HepG2 (cell line): ENCODE measurements at regions of chr13 and their contacts with region 1.

Region 1: DNA sequence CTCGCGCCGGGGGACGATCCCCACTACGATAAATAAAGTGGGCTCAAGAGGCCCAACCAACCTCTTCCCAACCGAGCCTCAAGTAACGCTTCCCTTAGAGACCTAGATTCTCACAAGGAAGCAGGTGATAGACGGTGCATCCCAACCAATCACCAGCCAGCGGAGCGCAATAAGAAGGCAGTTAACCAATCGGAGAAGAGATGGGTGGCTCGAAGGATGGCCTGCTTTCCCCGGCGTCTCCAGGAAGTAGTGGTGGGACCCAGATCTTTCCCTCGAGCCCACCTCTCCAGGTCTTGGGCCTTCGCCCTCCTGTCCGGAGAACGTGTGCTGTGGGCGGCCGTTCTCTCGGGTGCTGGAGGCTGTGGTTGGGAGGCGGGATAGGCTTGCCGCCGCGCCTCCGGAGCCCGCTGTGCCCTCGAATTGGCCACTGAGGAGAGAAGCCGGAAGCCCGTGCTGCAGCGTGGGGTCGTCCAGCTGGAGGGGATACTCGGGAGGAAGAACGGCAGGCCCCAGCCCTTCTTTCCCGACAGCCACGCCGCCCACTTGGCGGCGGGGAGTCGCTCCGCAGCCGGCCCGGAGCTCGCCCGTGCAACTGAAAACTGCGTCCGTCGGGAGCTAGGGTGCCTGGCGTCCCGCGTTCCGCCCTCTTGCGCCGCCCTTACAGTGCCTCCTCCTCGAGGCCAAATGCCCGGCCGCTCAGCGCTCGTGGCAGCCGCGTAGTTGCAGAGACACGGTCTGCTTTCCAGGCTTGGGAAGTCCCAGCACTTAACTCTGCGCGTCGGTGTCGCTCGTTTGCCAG is at the start of gene RNF6:
- DNase-seq: peak; percentile 94
- ATAC-seq: peak; percentile 98
- H3K4me3 ChIP-seq: peak within 1 kb of the TSS; percentile 95 to 99 (median 97)
- H3K27ac ChIP-seq: peak within 1 kb of the TSS; percentile 97
- H3K4me1 ChIP-seq: peaks cover 27% of the 10 kb centered on the region
- H3K27me3 ChIP-seq: no peaks in the 10 kb centered on the region; a peak in 1 of 5 replicates
- CTCF ChIP-seq: peak; percentile 35
- EP300 ChIP-seq: 0 out of 4 replicates have a peak, but pooled peaks of 1 of the 2 experiments have one; percentile 2
- POLR2A ChIP-seq: peak; percentile 65 to 92
- RAD21 ChIP-seq: 0 out of 2 replicates have a peak, but pooled peaks have one; percentile 26
- total RNA-seq, gene RNF6: 36.8 and 57.0 TPM in 2 replicates

Region 2: DNA sequence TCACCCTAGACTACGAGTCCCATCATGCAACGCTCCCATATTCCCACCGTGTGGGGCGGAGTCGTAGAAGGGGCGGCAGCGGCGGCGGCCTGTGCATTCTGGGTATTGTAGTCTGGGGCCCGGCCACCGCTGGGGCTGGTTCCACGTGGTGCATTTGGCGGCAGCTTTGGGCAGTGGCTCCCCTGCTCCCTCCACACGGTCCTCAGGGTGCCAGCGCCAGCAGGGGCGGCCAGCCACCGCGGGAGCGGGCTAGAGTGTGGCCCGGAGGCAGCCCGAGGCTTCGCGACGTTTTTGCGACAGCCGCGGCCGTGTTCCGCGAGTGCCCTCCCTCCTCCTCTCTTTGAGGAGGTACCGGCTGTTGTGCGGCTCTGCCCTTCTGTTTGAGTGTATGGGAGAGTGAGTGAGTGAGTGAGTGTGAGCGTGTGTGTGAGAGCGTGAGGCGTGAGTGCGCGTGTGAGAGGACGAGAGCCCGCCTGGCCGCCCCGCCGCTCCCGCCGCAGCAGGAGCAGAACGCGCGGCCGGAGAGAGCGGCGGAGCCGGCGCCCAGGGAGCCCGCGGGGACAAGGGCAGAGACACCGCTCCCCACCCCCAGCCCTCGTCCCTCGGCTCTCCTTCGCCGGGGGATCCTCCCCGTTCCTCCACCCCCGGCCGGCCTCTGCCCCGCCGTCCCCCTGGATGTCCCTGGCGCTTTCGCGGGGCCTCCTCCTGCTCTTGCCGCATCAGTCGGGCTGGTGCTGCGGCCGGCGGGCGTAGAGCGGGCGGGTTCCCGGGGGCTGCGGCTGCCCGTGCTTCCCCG is 32.1 kb after region 1 on chr13 and contains the start of gene CDK8:
- CTCF ChIA-PET with region 1: no interaction called
- POLR2A ChIA-PET with region 1: interaction called, 5 read pairs
- in situ Hi-C with region 1: no loop called
- intact Hi-C with region 1: loop called (anchors 2 kb)
- DNase-seq: peak; percentile 83
- ATAC-seq: peak; percentile 90
- H3K4me3 ChIP-seq: peak within 1 kb of the TSS; percentile 80 to 91 (median 90)
- H3K27ac ChIP-seq: peak within 1 kb of the TSS; percentile 87
- H3K4me1 ChIP-seq: peaks cover 39% of the 10 kb centered on the region
- H3K27me3 ChIP-seq: no peaks in the 10 kb centered on the region; a peak in 1 of 5 replicates
- CTCF ChIP-seq: peak; percentile 34
- EP300 ChIP-seq: no peak
- POLR2A ChIP-seq: peak; percentile 62 to 77
- RAD21 ChIP-seq: no peak
- total RNA-seq, gene CDK8: 16.4 and 21.3 TPM in 2 replicates